CD8-positive, alpha-beta T cell (primary cell): ENCODE measurements at regions of chr2 and their contacts with region 1.

Region 1: DNA sequence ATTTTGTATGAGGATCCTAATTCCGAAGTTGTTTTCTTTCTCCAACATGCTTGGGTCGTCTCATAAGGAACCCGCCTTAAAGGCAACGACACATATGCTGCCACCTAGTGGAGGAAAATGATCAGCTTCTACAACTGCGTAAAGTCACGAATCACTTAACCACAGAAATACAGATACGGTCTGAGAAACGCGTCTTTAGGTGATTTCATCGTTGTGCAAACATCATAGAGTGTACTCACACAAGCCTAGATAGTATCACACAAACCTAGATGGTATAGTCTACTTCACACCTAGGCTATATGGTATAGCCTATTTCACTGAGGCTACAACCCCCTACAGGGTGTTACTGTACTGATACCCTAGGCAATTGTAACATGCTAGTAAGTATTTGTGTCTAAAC is 13.1 kb downstream of the GNLY start:
- DNase-seq: peak in 8 of 9 experiments; percentile 44 to 89 (median 65)
- ATAC-seq: peak; percentile 85
- H3K4me3 ChIP-seq: no peak overlapping the region
- H3K4me3 Mint-ChIP-seq: no peak overlapping the region
- H3K27ac ChIP-seq: no peak overlapping the region
- H3K27ac Mint-ChIP-seq: no peak overlapping the region
- H3K4me1 ChIP-seq: peaks cover 12% of the 10 kb centered on the region
- H3K4me1 Mint-ChIP-seq: peaks cover 15% of the 10 kb centered on the region
- H3K27me3 ChIP-seq: no peaks in the 10 kb centered on the region
- H3K27me3 Mint-ChIP-seq: peaks cover 4% of the 10 kb centered on the region
- CTCF ChIP-seq: peak; percentile 62

Region 2: GRCh38 chr2:85390941-85391669 is 316.2 kb before region 1 on chr2:
- CTCF ChIA-PET with region 1: interaction called, 3 read pairs
- POLR2A ChIA-PET with region 1: no interaction called
- intact Hi-C with region 1: loop called in 1 of 2 experiments (anchors 5 kb)
- DNase-seq: peak; percentile 59 to 86 (median 72)
- ATAC-seq: peak; percentile 81
- H3K4me3 ChIP-seq: no peak overlapping the region
- H3K4me3 Mint-ChIP-seq: no peak overlapping the region
- H3K27ac ChIP-seq: no peak overlapping the region
- H3K27ac Mint-ChIP-seq: no peak overlapping the region
- H3K4me1 ChIP-seq: peaks cover 9% of the 10 kb centered on the region
- H3K4me1 Mint-ChIP-seq: peaks cover 4% of the 10 kb centered on the region
- H3K27me3 ChIP-seq: no peaks in the 10 kb centered on the region
- H3K27me3 Mint-ChIP-seq: no peaks in the 10 kb centered on the region
- CTCF ChIP-seq: peak; percentile 49

Region 3: DNA sequence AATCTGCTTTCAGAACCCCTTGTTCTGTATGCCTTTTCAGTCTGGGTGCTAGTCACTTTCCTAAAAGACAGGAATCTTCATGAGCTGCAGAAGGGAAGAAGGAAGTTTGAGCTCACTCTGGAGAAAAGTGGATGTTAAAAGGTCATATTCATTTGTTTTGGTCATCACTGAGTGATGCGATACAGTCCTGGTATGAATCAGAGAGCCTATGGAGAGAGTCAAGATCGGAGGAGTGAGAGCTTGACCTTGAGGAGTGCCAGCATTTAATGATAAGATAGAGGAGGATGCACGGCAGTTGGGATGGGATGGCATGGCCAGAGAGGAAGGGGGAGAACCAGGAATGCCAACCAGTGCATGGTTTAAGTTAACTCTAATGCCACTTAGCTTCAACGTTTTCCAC is 71.7 kb before region 1 on chr2:
- CTCF ChIA-PET with region 1: interaction called, 41 read pairs
- POLR2A ChIA-PET with region 1: no interaction called
- intact Hi-C with region 1: loop called (anchors 5 kb)
- DNase-seq: no peak
- ATAC-seq: no peak
- H3K4me3 ChIP-seq: no peak overlapping the region
- H3K4me3 Mint-ChIP-seq: no peak overlapping the region
- H3K27ac ChIP-seq: no peak overlapping the region
- H3K27ac Mint-ChIP-seq: peak overlapping the region; percentile 6
- H3K4me1 ChIP-seq: no peaks in the 10 kb centered on the region
- H3K4me1 Mint-ChIP-seq: peaks cover 21% of the 10 kb centered on the region
- H3K27me3 ChIP-seq: no peaks in the 10 kb centered on the region
- H3K27me3 Mint-ChIP-seq: no peaks in the 10 kb centered on the region
- CTCF ChIP-seq: no peak

Region 4: DNA sequence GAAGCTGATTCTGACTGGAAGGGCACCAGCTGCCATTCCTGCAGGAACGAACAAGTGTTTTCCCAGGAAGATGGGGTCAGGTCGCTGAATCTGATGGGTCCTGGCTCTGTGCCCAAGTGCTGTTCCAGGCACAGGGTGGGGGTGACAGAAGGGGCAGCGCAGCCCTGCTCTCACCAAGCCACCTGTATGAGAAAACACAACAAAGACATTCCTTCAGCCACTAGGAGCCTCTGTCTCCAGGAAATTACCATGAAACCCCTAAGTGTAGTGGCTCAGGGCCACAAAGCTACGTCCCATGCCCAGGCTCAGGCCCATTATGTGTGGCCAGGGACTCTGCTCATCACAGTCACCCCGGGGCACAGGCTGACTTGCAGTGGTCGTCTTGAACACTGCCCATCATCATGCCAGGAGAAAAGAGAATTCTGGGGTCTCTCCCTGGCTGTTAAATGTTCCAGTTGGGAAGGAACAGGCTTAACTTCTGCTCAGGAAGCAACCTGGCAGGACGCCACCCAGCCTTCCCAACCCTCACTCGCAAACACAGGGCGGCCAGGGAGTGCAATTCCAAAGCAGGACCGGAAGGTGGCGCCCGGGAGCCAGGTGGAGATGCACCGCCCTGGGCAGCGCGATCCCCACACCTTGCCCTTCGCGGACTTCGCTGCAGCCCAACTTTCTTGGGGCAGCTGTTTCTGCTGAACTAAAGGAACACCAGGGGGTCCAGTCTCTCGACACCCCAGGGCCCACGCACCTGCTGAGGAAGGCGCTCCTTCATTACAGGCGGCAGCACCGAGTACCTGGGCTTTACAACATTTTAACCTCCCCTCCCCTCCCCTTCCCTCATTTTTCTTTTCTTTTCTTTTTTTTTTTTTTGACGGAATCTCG is 28.3 kb before region 1 on chr2:
- CTCF ChIA-PET with region 1: interaction called, 68 read pairs
- POLR2A ChIA-PET with region 1: no interaction called
- intact Hi-C with region 1: loop called in 1 of 2 experiments (anchors 1 kb)
- DNase-seq: peak; percentile 59 to 85 (median 75)
- ATAC-seq: peak; percentile 98
- H3K4me3 ChIP-seq: peak overlapping the region in 1 of 2 experiments; percentile 19
- H3K4me3 Mint-ChIP-seq: no peak overlapping the region
- H3K27ac ChIP-seq: no peak overlapping the region
- H3K27ac Mint-ChIP-seq: no peak overlapping the region
- H3K4me1 ChIP-seq: peaks cover 7% of the 10 kb centered on the region
- H3K4me1 Mint-ChIP-seq: no peaks in the 10 kb centered on the region
- H3K27me3 ChIP-seq: no peaks in the 10 kb centered on the region
- H3K27me3 Mint-ChIP-seq: peaks cover 2% of the 10 kb centered on the region
- CTCF ChIP-seq: peak; percentile 91

Region 5: GRCh38 chr2:85694052-85695025 is 13.0 kb before region 1 on chr2 and contains the start of gene GNLY:
- CTCF ChIA-PET with region 1: interaction called, 18 read pairs
- POLR2A ChIA-PET with region 1: no interaction called
- intact Hi-C with region 1: no loop called
- DNase-seq: peak in 5 of 9 experiments; percentile 19 to 73 (median 48)
- ATAC-seq: peak; percentile 61
- H3K4me3 ChIP-seq: peak within 1 kb of the TSS; percentile 8 to 71
- H3K4me3 Mint-ChIP-seq: peak within 1 kb of the TSS; percentile 65
- H3K27ac ChIP-seq: peak within 1 kb of the TSS; percentile 50 to 76
- H3K27ac Mint-ChIP-seq: peak within 1 kb of the TSS; percentile 82
- H3K4me1 ChIP-seq: no peaks in the 10 kb centered on the region
- H3K4me1 Mint-ChIP-seq: peaks cover 2% of the 10 kb centered on the region
- H3K27me3 ChIP-seq: no peaks in the 10 kb centered on the region
- H3K27me3 Mint-ChIP-seq: peaks cover under 1% of the 10 kb centered on the region
- CTCF ChIP-seq: no peak
- total RNA-seq, gene GNLY: 90.8 to 92.9 TPM

Region 6: GRCh38 chr2:85728883-85729824 is 21.9 kb after region 1 on chr2:
- CTCF ChIA-PET with region 1: interaction called, 12 read pairs
- POLR2A ChIA-PET with region 1: no interaction called
- intact Hi-C with region 1: no loop called
- DNase-seq: peak; percentile 48 to 82 (median 73)
- ATAC-seq: peak; percentile 84
- H3K4me3 ChIP-seq: no peak overlapping the region
- H3K4me3 Mint-ChIP-seq: no peak overlapping the region
- H3K27ac ChIP-seq: no peak overlapping the region
- H3K27ac Mint-ChIP-seq: no peak overlapping the region
- H3K4me1 ChIP-seq: peaks cover 5% of the 10 kb centered on the region
- H3K4me1 Mint-ChIP-seq: peaks cover 2% of the 10 kb centered on the region
- H3K27me3 ChIP-seq: peaks cover 0 to 2% of the 10 kb centered on the region in 2 experiments
- H3K27me3 Mint-ChIP-seq: no peaks in the 10 kb centered on the region
- CTCF ChIP-seq: peak; percentile 78

Region 7: DNA sequence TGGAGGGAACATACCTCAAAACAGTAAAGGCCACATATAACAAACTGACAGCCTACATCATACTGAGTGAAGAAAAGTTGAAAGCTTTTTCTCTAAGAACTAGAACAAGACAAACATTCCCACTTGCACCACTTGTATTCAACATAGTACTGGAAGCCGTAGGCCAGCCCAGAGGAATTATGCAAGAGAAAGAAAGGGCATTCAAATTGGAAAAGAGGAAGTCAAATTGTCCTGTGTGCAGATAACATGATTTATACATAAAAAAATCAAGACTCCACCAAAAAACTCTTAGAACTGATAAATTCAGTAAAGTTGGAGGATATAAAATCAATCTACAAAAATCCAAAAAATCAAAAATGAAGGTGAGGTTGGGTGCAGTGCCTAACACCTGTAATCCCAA is 725.8 kb after region 1 on chr2:
- CTCF ChIA-PET with region 1: no interaction called
- POLR2A ChIA-PET with region 1: no interaction called
- intact Hi-C with region 1: no loop called
- DNase-seq: no peak
- ATAC-seq: no peak
- H3K4me3 ChIP-seq: no peak overlapping the region
- H3K4me3 Mint-ChIP-seq: no peak overlapping the region
- H3K27ac ChIP-seq: no peak overlapping the region
- H3K27ac Mint-ChIP-seq: no peak overlapping the region
- H3K4me1 ChIP-seq: no peaks in the 10 kb centered on the region
- H3K4me1 Mint-ChIP-seq: no peaks in the 10 kb centered on the region
- H3K27me3 ChIP-seq: no peaks in the 10 kb centered on the region
- H3K27me3 Mint-ChIP-seq: no peaks in the 10 kb centered on the region
- CTCF ChIP-seq: no peak